PC-9 (cell line): ENCODE measurements at regions of chr1 and their contacts with region 1.

Region 1: DNA sequence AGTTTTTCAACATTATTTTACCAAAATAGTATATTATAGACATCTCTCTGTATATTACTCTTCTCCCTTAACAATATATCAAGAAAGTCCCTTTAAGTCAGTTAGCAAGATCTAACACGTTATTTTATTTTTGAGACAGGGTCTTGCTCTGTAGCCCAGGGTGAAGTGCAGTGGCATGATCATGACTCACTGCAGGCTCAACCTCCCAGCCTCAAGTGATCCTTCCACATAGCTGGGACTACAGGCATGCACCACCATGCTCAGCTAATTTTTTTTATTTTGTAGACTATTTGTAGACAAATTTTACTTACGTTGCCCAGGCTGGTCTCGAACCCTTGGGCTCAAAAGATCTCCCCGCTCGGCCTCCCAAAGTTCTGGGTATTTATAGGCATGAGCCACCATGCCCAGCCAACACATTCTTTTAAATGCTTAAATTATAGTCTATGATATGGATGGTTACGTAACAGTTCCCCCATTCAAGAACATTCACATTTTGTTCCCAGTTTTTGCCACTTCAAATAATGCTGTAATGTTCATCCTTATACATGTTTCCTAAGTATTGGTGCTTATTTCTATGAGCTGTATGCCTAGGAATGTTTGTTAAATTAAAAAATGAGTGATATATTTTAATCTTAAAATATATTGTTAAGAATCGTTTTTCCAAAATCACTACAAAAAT is 70.4 kb downstream of the TUT4 start:
- DNase-seq: no peak
- H3K4me3 ChIP-seq: no peak overlapping the region
- H3K27ac ChIP-seq: no peak overlapping the region
- H3K4me1 ChIP-seq: no peaks in the 10 kb centered on the region
- H3K27me3 ChIP-seq: no peaks in the 10 kb centered on the region
- CTCF ChIP-seq: no peak

Region 2: GRCh38 chr1:52080014-52080415 is 402.4 kb before region 1 on chr1:
- CTCF ChIA-PET with region 1: no interaction called
- POLR2A ChIA-PET with region 1: no interaction called
- intact Hi-C with region 1: no loop called
- DNase-seq: no peak
- H3K4me3 ChIP-seq: no peak overlapping the region
- H3K27ac ChIP-seq: no peak overlapping the region
- H3K4me1 ChIP-seq: no peaks in the 10 kb centered on the region
- H3K27me3 ChIP-seq: no peaks in the 10 kb centered on the region
- CTCF ChIP-seq: no peak

Region 3: GRCh38 chr1:52506349-52506748 is 23.9 kb after region 1 on chr1:
- CTCF ChIA-PET with region 1: no interaction called
- POLR2A ChIA-PET with region 1: interaction called, 10 read pairs
- intact Hi-C with region 1: no loop called
- DNase-seq: no peak
- H3K4me3 ChIP-seq: no peak overlapping the region
- H3K27ac ChIP-seq: no peak overlapping the region
- H3K4me1 ChIP-seq: no peaks in the 10 kb centered on the region
- H3K27me3 ChIP-seq: no peaks in the 10 kb centered on the region
- CTCF ChIP-seq: no peak